H1 (cell line): ENCODE measurements at regions of chr5 and their contacts with region 1.

Region 1: DNA sequence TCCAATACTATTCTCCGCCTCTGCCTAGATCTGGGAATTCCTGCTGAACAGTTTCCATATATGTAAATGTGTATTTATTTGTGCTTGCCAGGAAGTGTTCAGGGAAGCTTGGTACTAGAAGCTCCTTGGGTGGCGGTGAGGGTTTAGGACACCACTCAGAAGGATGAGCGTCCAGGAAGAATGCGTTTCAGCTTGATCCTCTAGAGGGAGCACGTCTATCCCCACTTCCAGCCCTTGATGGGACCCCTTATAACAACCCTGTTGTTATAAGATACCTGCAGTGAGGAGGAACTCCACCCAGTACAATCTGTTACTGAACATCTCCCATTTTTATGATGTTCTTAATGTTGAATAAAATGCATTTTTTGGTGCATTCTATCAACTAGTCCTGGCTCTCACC is 88.9 kb downstream of the CYFIP2 start:
- DNase-seq: peak in 1 of 2 experiments; percentile 62
- H3K4me3 ChIP-seq: no peak overlapping the region
- H3K27ac ChIP-seq: no peak overlapping the region
- H3K4me1 ChIP-seq: no peaks in the 10 kb centered on the region
- H3K27me3 ChIP-seq: no peaks in the 10 kb centered on the region
- CTCF ChIP-seq: peak; percentile 52 to 79 (median 58)
- EP300 ChIP-seq: no peak
- POLR2A ChIP-seq: no peak
- RAD21 ChIP-seq: peak; percentile 19 to 43; a peak in 2 of 4 replicates

Region 2: GRCh38 chr5:157142317-157143126 is 212.3 kb before region 1 on chr5 and contains the start of gene MED7:
- CTCF ChIA-PET with region 1: no interaction called
- POLR2A ChIA-PET with region 1: no interaction called
- DNase-seq: peak; percentile 84 to 88
- H3K4me3 ChIP-seq: peak within 1 kb of the TSS; percentile 91 to 97 (median 92)
- H3K27ac ChIP-seq: peak within 1 kb of the TSS; percentile 82
- H3K4me1 ChIP-seq: no peaks in the 10 kb centered on the region
- H3K27me3 ChIP-seq: no peaks in the 10 kb centered on the region
- CTCF ChIP-seq: no peak
- EP300 ChIP-seq: no peak
- POLR2A ChIP-seq: peak; percentile 60 to 86
- RAD21 ChIP-seq: no peak
- total RNA-seq, gene MED7: 8.3 and 9.5 TPM in 2 replicates

Region 3: DNA sequence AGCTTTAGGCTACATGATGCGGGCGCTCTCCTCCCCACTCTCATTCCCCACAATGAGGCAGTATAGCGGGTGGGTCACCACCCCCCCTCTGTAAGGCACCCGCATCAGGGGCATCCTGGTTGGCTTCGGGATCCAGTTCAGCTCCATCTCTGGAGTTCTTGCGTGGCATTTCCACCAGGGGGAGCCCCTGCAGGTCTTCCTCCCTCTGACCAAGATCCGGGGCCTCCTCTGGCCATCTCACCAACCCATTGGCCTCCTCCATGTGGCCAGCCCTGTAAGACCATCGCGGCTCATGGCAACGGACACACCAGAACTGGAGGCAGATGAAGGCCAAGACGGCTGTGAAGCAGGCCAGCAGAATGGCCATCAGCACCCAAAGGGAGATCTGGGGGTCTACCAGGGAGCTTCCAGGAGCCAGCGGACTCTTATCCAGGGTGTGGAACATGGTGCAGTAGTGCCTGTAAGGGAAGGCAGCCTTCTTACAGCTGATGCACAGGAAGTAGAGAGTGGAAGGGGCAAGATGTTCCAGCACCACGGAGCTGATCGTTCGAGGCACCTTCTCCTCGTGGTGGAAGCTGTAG is 11.9 kb before region 1 on chr5:
- CTCF ChIA-PET with region 1: interaction called, 282 read pairs
- POLR2A ChIA-PET with region 1: interaction called, 3 read pairs
- DNase-seq: peak in 1 of 2 experiments; percentile 82
- H3K4me3 ChIP-seq: no peak overlapping the region
- H3K27ac ChIP-seq: no peak overlapping the region
- H3K4me1 ChIP-seq: no peaks in the 10 kb centered on the region
- H3K27me3 ChIP-seq: no peaks in the 10 kb centered on the region
- CTCF ChIP-seq: peak; percentile 69 to 77 (median 72)
- EP300 ChIP-seq: no peak
- POLR2A ChIP-seq: no peak
- RAD21 ChIP-seq: peak; percentile 29 to 52; a peak in 3 of 4 replicates

Region 4: GRCh38 chr5:157370967-157371366 is 16.2 kb after region 1 on chr5:
- CTCF ChIA-PET with region 1: interaction called, 22 read pairs
- POLR2A ChIA-PET with region 1: no interaction called
- DNase-seq: no peak
- H3K4me3 ChIP-seq: no peak overlapping the region
- H3K27ac ChIP-seq: no peak overlapping the region
- H3K4me1 ChIP-seq: peaks cover 0 to 5% (median 3%) of the 10 kb centered on the region in 4 experiments; a peak in 4 of 7 replicates
- H3K27me3 ChIP-seq: no peaks in the 10 kb centered on the region
- CTCF ChIP-seq: no peak
- EP300 ChIP-seq: no peak
- POLR2A ChIP-seq: no peak
- RAD21 ChIP-seq: no peak

Region 5: GRCh38 chr5:157596487-157596886 is 241.7 kb after region 1 on chr5:
- CTCF ChIA-PET with region 1: no interaction called
- POLR2A ChIA-PET with region 1: no interaction called
- DNase-seq: no peak
- H3K4me3 ChIP-seq: no peak overlapping the region
- H3K27ac ChIP-seq: no peak overlapping the region
- H3K4me1 ChIP-seq: no peaks in the 10 kb centered on the region
- H3K27me3 ChIP-seq: no peaks in the 10 kb centered on the region
- CTCF ChIP-seq: no peak
- EP300 ChIP-seq: no peak
- POLR2A ChIP-seq: no peak
- RAD21 ChIP-seq: no peak